Cardiac septum (tissue), 1 donor: ENCODE measurements at regions of chr22 and their contacts with region 1.

Region 1: DNA sequence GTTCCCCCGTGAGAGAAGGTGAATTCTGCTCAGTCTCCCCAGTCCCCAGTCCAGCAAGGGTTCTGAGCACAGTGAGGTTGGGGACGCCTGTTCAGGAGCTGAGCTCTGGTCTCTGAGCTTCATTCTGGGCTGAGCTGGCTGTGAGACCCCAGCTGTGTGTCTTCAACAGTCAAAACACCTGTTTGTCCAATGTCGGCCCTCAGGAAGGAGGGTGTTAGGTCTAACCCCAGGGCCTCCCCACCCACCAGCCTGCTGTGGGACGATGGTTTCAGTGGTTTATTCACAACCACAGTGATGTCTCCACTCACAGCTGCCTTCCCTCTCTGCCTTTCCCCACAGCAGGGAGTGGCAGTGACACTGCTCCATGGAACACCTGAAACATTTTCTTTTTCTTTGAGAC is 1282.9 kb downstream of the TBC1D22A start:
- DNase-seq: no peak

Region 2: DNA sequence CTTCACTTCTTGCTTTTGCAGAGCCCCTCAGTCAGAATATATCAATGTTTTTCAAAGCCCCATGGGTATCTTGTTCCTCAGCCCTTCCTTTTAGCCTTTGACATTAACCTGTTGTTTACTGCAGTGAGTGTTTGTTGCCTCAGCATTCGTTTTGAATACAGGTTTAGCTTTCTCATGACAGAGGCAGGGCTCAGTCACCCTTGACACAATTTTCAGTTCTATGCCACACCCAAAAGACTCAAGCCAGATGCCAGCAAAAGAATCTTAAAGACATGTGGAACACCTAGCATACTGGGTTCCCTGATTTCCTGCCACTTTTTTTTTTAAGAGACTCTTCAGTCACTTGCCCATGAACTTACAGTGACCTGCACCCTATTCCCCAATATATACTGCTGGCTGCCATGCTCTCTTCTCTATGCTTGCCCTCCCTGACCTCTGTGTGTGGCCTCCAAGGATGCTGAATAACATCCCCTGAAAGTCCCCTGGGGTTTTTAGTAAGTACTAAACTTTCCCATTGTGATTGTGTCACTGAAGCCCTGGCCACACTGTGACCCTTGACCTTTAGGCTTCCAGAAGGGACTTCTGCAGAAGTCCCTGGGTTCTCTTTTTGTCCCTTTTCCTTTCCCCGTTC is 57.4 kb before region 1 on chr22:
- intact Hi-C with region 1: loop called (anchors 10 kb)
- DNase-seq: no peak

Region 3: DNA sequence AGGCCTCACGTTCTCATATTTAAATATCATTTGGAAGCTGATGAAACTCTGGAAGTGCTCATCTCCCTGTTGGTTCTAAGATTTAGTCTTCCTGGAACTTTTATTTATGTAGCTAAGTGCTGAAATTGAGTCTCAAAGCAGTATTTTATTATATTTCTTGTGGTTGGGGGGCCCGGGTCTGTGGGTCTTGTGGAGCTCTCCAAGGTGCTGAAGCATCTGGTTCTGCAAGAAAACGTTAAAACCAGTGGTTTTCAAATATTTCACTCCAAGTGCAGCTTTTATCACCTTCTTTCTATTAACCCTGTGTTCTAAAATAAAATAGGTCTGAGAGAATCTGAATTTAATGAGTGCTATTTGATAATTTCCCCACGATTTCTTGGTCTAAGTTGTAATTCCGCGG is 121.9 kb after region 1 on chr22:
- intact Hi-C with region 1: no loop called
- DNase-seq: no peak